ENCODE measurements at regions of chr13 and their contacts with region 1.

Region 1: GRCh38 chr13:77751513-77752456 is 54.3 kb downstream of the SLAIN1 start:
- DNase-seq: peak; percentile 87
- H3K4me3 Mint-ChIP-seq: no peak overlapping the region
- H3K27ac Mint-ChIP-seq: peak overlapping the region; percentile 69
- H3K4me1 Mint-ChIP-seq: peaks cover 14% of the 10 kb centered on the region
- H3K27me3 Mint-ChIP-seq: no peaks in the 10 kb centered on the region

Region 2: GRCh38 chr13:77492982-77493381 is 258.8 kb before region 1 on chr13:
- intact Hi-C with region 1: loop called (anchors 5 kb)
- DNase-seq: no peak
- H3K4me3 Mint-ChIP-seq: no peak overlapping the region
- H3K27ac Mint-ChIP-seq: no peak overlapping the region
- H3K4me1 Mint-ChIP-seq: no peaks in the 10 kb centered on the region
- H3K27me3 Mint-ChIP-seq: no peaks in the 10 kb centered on the region

Region 3: DNA sequence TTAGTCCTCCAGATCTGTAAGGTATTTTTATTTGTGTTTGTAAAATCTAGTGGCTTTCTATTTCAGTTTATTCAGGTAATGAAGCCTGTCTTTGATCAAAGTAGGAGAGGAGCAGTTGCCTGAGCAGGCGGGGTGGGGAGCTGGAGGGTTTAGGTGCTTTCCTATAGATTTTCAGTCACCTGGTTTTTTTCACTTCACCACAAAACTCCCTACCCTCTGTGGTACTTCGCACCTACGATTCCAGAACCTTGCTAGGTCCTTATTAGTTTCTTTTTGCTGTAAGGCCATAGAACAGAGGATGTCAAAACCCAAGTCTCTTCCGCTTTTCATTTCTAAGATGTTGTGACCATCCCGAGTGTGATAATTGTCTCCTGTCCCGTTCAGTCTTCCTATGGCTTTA is 27.7 kb before region 1 on chr13:
- intact Hi-C with region 1: no loop called
- DNase-seq: peak; percentile 61
- H3K4me3 Mint-ChIP-seq: no peak overlapping the region
- H3K27ac Mint-ChIP-seq: no peak overlapping the region
- H3K4me1 Mint-ChIP-seq: peaks cover 25% of the 10 kb centered on the region
- H3K27me3 Mint-ChIP-seq: no peaks in the 10 kb centered on the region